Activated CD4-positive, alpha-beta T cell treated with anti-CD3 and anti-CD28 coated beads for 36 hours (primary cell): ENCODE measurements at regions of chr9 and their contacts with region 1.

Region 1: DNA sequence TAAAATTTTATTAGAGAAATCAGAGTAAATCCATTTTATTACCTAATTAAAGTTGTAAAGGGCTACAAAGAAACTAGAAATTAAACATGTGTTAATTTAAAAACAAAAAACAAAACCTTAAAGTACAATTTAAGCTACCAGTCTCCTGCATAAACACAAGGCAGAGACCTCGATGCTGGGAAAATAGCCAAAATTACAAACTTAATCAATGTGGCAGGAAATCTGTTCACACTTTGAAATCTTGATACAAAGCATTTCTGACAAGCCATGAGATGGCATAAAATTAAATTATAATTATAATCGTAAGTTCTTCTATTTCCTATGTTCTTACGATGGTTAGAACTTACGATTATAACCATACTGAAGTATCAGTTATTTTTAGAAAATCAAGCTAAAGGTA is 158.0 kb upstream of the FREM1 start:
- DNase-seq: no peak
- ATAC-seq: no peak
- H3K4me3 Mint-ChIP-seq: no peak overlapping the region
- H3K27ac Mint-ChIP-seq: no peak overlapping the region
- H3K4me1 Mint-ChIP-seq: no peaks in the 10 kb centered on the region
- H3K27me3 Mint-ChIP-seq: no peaks in the 10 kb centered on the region

Region 2: GRCh38 chr9:14423815-14424261 is 644.4 kb before region 1 on chr9:
- CTCF ChIA-PET with region 1: no interaction called
- POLR2A ChIA-PET with region 1: no interaction called
- intact Hi-C with region 1: no loop called
- DNase-seq: no peak
- ATAC-seq: no peak
- H3K4me3 Mint-ChIP-seq: no peak overlapping the region
- H3K27ac Mint-ChIP-seq: no peak overlapping the region
- H3K4me1 Mint-ChIP-seq: no peaks in the 10 kb centered on the region
- H3K27me3 Mint-ChIP-seq: peaks cover 5% of the 10 kb centered on the region

Region 3: GRCh38 chr9:15116130-15116580 is 47.9 kb after region 1 on chr9:
- CTCF ChIA-PET with region 1: interaction called, 3 read pairs
- POLR2A ChIA-PET with region 1: no interaction called
- intact Hi-C with region 1: loop called in 1 of 2 experiments (anchors 10 kb)
- DNase-seq: no peak
- ATAC-seq: no peak
- H3K4me3 Mint-ChIP-seq: no peak overlapping the region
- H3K27ac Mint-ChIP-seq: no peak overlapping the region
- H3K4me1 Mint-ChIP-seq: peaks cover 8% of the 10 kb centered on the region
- H3K27me3 Mint-ChIP-seq: no peaks in the 10 kb centered on the region